ENCODE measurements at regions of chr21 and their contacts with region 1.

Region 1: DNA sequence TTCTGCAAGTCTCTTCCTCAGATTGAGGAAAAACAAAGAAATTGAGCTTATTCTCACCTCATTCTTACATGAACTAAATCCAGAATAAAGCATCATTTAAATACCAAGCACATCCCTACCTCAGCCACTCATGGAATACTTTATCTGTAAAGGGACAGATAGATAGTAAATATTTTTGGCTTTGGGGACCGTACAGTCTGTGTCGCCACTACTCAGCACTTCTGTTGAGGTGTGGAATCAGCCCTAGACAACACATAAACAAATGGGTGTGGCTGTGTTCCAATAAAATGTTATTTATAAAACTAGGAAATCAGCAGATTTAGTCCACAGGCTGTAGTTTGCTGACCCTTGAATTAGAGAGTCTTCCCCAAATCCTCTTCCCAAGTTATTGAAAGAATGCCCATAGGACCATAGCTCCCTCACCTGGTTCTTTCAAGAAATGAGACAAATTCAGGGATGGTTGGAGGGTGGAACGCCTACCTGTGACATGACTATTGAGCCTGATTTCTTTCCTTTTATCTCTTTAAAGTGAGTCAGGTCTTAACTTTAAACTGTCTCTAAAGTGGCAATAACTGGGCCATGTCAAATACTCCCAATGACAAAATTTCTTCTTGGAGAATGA is 878.5 kb downstream of the USP25 start:
- DNase-seq: no peak
- ATAC-seq: no peak
- H3K4me3 ChIP-seq: no peak overlapping the region
- H3K27ac ChIP-seq: no peak overlapping the region
- H3K4me1 ChIP-seq: no peaks in the 10 kb centered on the region
- H3K27me3 ChIP-seq: no peaks in the 10 kb centered on the region
- CTCF ChIP-seq: no peak
- POLR2A ChIP-seq: no peak

Region 2: DNA sequence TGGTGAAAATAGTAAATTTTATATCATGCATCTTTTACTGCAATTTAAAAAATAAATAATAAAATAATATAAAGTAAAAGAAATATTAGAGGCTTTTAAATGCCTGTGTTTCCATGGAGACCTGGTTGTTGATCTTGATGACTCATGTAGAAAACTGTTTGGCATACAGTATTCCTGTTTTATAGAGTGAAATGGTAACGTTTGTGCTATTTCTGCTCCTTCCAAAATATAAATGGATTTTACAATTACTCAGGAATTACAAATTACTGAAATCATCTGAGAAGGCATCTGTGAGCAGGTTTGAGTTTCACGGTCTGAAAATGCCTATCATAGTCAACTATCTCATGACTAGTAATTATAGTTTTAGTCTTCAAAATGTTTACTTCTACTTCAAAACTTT is 977.0 kb before region 1 on chr21:
- in situ Hi-C with region 1: no loop called
- intact Hi-C with region 1: no loop called
- DNase-seq: no peak
- ATAC-seq: no peak
- H3K4me3 ChIP-seq: no peak overlapping the region
- H3K27ac ChIP-seq: no peak overlapping the region
- H3K4me1 ChIP-seq: no peaks in the 10 kb centered on the region
- H3K27me3 ChIP-seq: no peaks in the 10 kb centered on the region
- CTCF ChIP-seq: no peak
- POLR2A ChIP-seq: no peak

Region 3: GRCh38 chr21:16509476-16509875 is 98.8 kb before region 1 on chr21:
- in situ Hi-C with region 1: loop called in 1 of 4 experiments (anchors 25 kb)
- intact Hi-C with region 1: no loop called
- DNase-seq: no peak
- ATAC-seq: no peak
- H3K4me3 ChIP-seq: no peak overlapping the region
- H3K27ac ChIP-seq: no peak overlapping the region
- H3K4me1 ChIP-seq: peaks cover 5 to 8% of the 10 kb centered on the region in 2 donors
- H3K27me3 ChIP-seq: no peaks in the 10 kb centered on the region
- CTCF ChIP-seq: no peak
- POLR2A ChIP-seq: no peak